ENCODE measurements at regions of chr14 and their contacts with region 1.

Region 1: GRCh38 chr14:34098045-34098984 is 147.4 kb upstream of the EGLN3 start:
- DNase-seq: peak; percentile 50
- H3K4me3 Mint-ChIP-seq: no peak overlapping the region
- H3K27ac Mint-ChIP-seq: no peak overlapping the region
- H3K4me1 Mint-ChIP-seq: peaks cover 10% of the 10 kb centered on the region
- H3K27me3 Mint-ChIP-seq: no peaks in the 10 kb centered on the region
- CTCF ChIP-seq: peak; percentile 77

Region 2: GRCh38 chr14:32710731-32711680 is 1387.3 kb before region 1 on chr14:
- CTCF ChIA-PET with region 1: no interaction called
- POLR2A ChIA-PET with region 1: no interaction called
- intact Hi-C with region 1: loop called (anchors 5 kb)
- DNase-seq: peak; percentile 56
- H3K4me3 Mint-ChIP-seq: no peak overlapping the region
- H3K27ac Mint-ChIP-seq: no peak overlapping the region
- H3K4me1 Mint-ChIP-seq: peaks cover 6% of the 10 kb centered on the region
- H3K27me3 Mint-ChIP-seq: no peaks in the 10 kb centered on the region
- CTCF ChIP-seq: peak; percentile 56

Region 3: DNA sequence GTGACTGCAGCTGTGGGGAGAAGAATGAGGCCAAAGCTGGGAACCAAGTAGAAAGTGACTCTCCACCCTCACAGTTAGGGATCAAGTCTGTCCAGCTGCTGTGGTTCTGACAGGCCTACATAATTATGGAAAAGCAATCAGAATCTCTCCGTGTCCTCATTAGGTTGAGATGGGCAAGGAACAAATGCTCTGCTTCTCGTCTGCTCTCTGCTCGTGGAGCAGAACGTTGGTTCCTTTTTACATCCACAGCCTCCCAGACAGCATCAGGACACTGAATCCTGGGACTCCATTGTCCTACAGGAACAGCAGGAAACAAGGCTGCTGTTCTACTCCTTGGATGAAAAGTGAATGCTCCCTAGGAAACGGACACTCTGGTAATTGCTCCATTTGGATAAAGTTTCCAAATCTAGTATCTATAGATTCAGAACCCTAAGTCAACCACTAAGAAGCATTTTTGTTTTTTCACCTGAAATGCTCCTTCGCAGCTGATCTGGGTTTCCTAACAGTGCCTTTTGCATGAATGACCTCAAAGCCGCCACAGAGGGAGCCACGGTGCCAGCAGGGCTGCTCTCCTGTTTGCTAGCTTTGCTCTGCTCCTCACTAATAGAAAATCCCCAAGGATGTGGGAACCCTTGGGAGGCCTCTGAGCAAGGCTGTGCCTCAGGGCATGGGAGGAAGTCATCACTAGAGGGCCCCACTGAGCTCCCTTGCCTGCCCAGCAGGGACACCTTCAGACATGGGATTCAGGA is 249.4 kb before region 1 on chr14:
- CTCF ChIA-PET with region 1: interaction called, 408 read pairs
- POLR2A ChIA-PET with region 1: no interaction called
- intact Hi-C with region 1: loop called (anchors 1 kb)
- DNase-seq: peak; percentile 71
- H3K4me3 Mint-ChIP-seq: no peak overlapping the region
- H3K27ac Mint-ChIP-seq: no peak overlapping the region
- H3K4me1 Mint-ChIP-seq: no peaks in the 10 kb centered on the region
- H3K27me3 Mint-ChIP-seq: no peaks in the 10 kb centered on the region
- CTCF ChIP-seq: peak; percentile 58

Region 4: GRCh38 chr14:34063470-34064164 is 34.7 kb before region 1 on chr14:
- CTCF ChIA-PET with region 1: interaction called, 12 read pairs
- POLR2A ChIA-PET with region 1: interaction called, 4 read pairs
- intact Hi-C with region 1: no loop called
- DNase-seq: no peak
- H3K4me3 Mint-ChIP-seq: no peak overlapping the region
- H3K27ac Mint-ChIP-seq: no peak overlapping the region
- H3K4me1 Mint-ChIP-seq: peaks cover 13% of the 10 kb centered on the region
- H3K27me3 Mint-ChIP-seq: no peaks in the 10 kb centered on the region
- CTCF ChIP-seq: no peak

Region 5: DNA sequence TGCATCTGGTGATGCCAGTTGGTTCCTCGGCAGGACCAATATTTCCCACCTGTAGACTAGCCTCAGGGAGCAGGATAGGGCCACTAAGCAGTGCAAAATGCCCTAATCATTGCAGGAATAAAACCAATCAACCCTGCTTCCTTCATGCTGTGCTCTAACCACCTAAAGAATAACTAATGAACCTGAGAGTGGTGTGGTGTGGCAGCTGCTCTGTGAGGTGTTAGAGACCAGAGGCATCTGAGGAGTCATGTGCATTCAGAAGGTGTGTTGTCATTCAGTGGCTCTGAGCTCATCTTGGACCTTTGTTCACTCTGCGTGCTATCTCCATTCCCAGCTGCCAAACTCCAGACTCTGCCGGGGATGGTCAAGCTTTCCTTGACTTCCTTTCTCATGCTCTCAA is 10.8 kb before region 1 on chr14:
- CTCF ChIA-PET with region 1: interaction called, 34 read pairs
- POLR2A ChIA-PET with region 1: interaction called, 3 read pairs
- intact Hi-C with region 1: no loop called
- DNase-seq: no peak
- H3K4me3 Mint-ChIP-seq: no peak overlapping the region
- H3K27ac Mint-ChIP-seq: no peak overlapping the region
- H3K4me1 Mint-ChIP-seq: no peaks in the 10 kb centered on the region
- H3K27me3 Mint-ChIP-seq: no peaks in the 10 kb centered on the region
- CTCF ChIP-seq: no peak

Region 6: GRCh38 chr14:34227834-34228649 is 129.7 kb after region 1 on chr14:
- CTCF ChIA-PET with region 1: interaction called, 37 read pairs
- POLR2A ChIA-PET with region 1: interaction called, 3 read pairs
- intact Hi-C with region 1: loop called (anchors 2 kb)
- DNase-seq: peak; percentile 70
- H3K4me3 Mint-ChIP-seq: peak overlapping the region; percentile 46
- H3K27ac Mint-ChIP-seq: peak overlapping the region; percentile 50
- H3K4me1 Mint-ChIP-seq: peaks cover 31% of the 10 kb centered on the region
- H3K27me3 Mint-ChIP-seq: no peaks in the 10 kb centered on the region
- CTCF ChIP-seq: peak; percentile 76

Region 7: GRCh38 chr14:34322940-34323418 is 224.7 kb after region 1 on chr14:
- CTCF ChIA-PET with region 1: interaction called, 20 read pairs
- POLR2A ChIA-PET with region 1: no interaction called
- intact Hi-C with region 1: loop called (anchors 5 kb)
- DNase-seq: peak; percentile 85
- H3K4me3 Mint-ChIP-seq: no peak overlapping the region
- H3K27ac Mint-ChIP-seq: no peak overlapping the region
- H3K4me1 Mint-ChIP-seq: peaks cover 10% of the 10 kb centered on the region
- H3K27me3 Mint-ChIP-seq: no peaks in the 10 kb centered on the region
- CTCF ChIP-seq: peak; percentile 75

Measured in MCF 10A (cell line).